Ascending aorta (tissue), 2 donors: ENCODE measurements at regions of chr5 and their contacts with region 1.

Region 1: GRCh38 chr5:151157426-151158286 is at the start of gene ANXA6:
- DNase-seq: peak; percentile 55 to 93
- H3K4me3 ChIP-seq: peak within 1 kb of the TSS; percentile 76 to 80
- H3K27ac ChIP-seq: peak within 1 kb of the TSS; percentile 82 to 88
- H3K4me1 ChIP-seq: peaks cover 9 to 26% of the 10 kb centered on the region in 2 donors
- H3K27me3 ChIP-seq: no peaks in the 10 kb centered on the region
- CTCF ChIP-seq: no peak
- total RNA-seq, gene ANXA6: 334 TPM

Region 2: GRCh38 chr5:151252762-151253604 is 95.3 kb after region 1 on chr5 and contains the start of gene GM2A:
- intact Hi-C with region 1: loop called (anchors 5 kb)
- DNase-seq: peak; percentile 98 to 100
- H3K4me3 ChIP-seq: peak within 1 kb of the TSS; percentile 77 to 88
- H3K27ac ChIP-seq: peak within 1 kb of the TSS; percentile 52 to 75
- H3K4me1 ChIP-seq: peaks cover 5 to 11% of the 10 kb centered on the region in 2 donors
- H3K27me3 ChIP-seq: no peaks in the 10 kb centered on the region
- CTCF ChIP-seq: no peak
- total RNA-seq, gene GM2A: 15.0 TPM